Head of caudate nucleus (tissue), 42 donors: ENCODE measurements at regions of chr6 and their contacts with region 1.

Region 1: GRCh38 chr6:154675602-154676088 is 57.6 kb upstream of the SCAF8 start:
- DNase-seq: peak; percentile 64 to 98 (median 91)

Region 2: DNA sequence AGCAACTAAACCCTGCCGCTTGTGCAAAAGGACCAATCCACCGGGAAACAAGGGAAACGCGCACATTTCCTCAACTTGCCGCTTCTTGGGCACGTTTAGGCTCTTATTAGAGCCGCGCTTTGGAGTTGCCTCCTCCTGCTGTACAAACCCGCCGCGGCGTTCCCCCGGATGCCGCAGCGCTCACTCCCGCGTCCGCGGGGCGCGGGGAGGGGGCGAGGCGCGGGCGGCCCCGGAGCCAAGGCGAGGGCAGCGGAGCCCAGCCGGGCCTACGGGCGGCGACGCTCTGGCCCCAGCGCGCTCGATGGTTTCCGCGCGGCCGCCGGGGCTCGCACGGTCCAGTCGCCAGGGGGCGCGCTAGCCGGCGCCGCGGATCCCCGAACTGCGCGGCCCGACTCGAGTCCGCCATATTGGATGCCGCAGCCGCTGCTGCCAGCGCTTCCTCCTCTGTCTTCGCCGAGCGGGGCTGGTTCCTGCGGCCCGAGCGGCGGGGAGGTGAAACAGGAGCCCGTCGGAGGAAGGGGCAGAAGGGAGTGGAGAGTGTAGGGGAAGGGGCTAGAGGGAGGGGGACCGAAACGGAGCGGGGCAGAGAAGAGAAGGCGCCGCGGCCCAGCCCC is 57.5 kb after region 1 on chr6 and contains the start of gene SCAF8:
- intact Hi-C with region 1: loop called (anchors 2 kb)
- DNase-seq: peak; percentile 41 to 92 (median 84)

Region 3: DNA sequence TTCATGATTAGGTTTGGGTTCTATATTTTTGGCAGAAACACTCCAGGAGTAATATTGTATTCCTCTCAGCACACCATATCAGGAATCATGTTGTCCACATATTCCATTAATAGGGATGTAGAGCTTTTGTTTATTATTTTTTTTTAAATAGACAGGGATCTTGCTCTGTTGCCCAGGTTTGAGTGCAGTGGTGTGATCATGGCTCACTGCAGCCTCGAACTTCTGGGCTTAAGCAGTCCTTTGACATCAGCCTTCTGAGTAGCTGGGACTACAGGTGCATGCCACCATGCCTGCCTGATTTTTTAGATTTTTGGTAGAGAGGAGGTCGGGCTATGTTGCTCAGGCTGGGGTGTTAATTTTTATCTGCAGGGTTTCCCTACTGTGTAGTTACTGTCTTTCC is 69.6 kb after region 1 on chr6:
- intact Hi-C with region 1: no loop called
- DNase-seq: no peak

Region 4: GRCh38 chr6:154805288-154805911 is 129.8 kb after region 1 on chr6:
- intact Hi-C with region 1: loop called (anchors 2 kb)
- DNase-seq: peak in 2 of 42 donors; percentile 13